Stomach (tissue), 19 donors: ENCODE measurements at regions of chr2 and their contacts with region 1.

Region 1: GRCh38 chr2:127859712-127860085 is 1.7 kb upstream of the POLR2D start:
- DNase-seq: peak; percentile 88 to 93
- H3K4me3 ChIP-seq: no peak overlapping the region
- H3K27ac ChIP-seq: no peak overlapping the region
- H3K4me1 ChIP-seq: peaks cover 15 to 48% (median 37%) of the 10 kb centered on the region in 4 donors
- H3K27me3 ChIP-seq: no peaks in the 10 kb centered on the region
- CTCF ChIP-seq: no peak
- EP300 ChIP-seq: no peak
- POLR2A ChIP-seq: no peak

Region 2: GRCh38 chr2:127563458-127564428 is 296.0 kb before region 1 on chr2:
- intact Hi-C with region 1: no loop called
- DNase-seq: peak in 1 of 2 donors; percentile 20
- H3K4me3 ChIP-seq: no peak overlapping the region
- H3K27ac ChIP-seq: no peak overlapping the region
- H3K4me1 ChIP-seq: no peaks in the 10 kb centered on the region
- H3K27me3 ChIP-seq: peaks cover 0 to 11% (median 4%) of the 10 kb centered on the region in 3 donors
- CTCF ChIP-seq: no peak
- EP300 ChIP-seq: no peak
- POLR2A ChIP-seq: no peak

Region 3: GRCh38 chr2:127573771-127574170 is 285.9 kb before region 1 on chr2:
- intact Hi-C with region 1: no loop called
- DNase-seq: peak in 1 of 2 donors; percentile 20
- H3K4me3 ChIP-seq: no peak overlapping the region
- H3K27ac ChIP-seq: no peak overlapping the region
- H3K4me1 ChIP-seq: no peaks in the 10 kb centered on the region
- H3K27me3 ChIP-seq: peaks cover 0 to 16% (median 0%) of the 10 kb centered on the region in 3 donors
- CTCF ChIP-seq: no peak
- EP300 ChIP-seq: no peak
- POLR2A ChIP-seq: no peak

Region 4: GRCh38 chr2:127807678-127808353 is 51.9 kb before region 1 on chr2:
- intact Hi-C with region 1: loop called (anchors 5 kb)
- DNase-seq: no peak
- H3K4me3 ChIP-seq: no peak overlapping the region
- H3K27ac ChIP-seq: no peak overlapping the region
- H3K4me1 ChIP-seq: peaks cover 37 to 77% (median 55%) of the 10 kb centered on the region in 4 donors
- H3K27me3 ChIP-seq: no peaks in the 10 kb centered on the region
- CTCF ChIP-seq: no peak
- EP300 ChIP-seq: no peak
- POLR2A ChIP-seq: no peak

Region 5: GRCh38 chr2:127996160-127996559 is 136.5 kb after region 1 on chr2:
- intact Hi-C with region 1: no loop called
- DNase-seq: no peak
- H3K4me3 ChIP-seq: no peak overlapping the region
- H3K27ac ChIP-seq: no peak overlapping the region
- H3K4me1 ChIP-seq: no peaks in the 10 kb centered on the region
- H3K27me3 ChIP-seq: no peaks in the 10 kb centered on the region
- CTCF ChIP-seq: no peak
- EP300 ChIP-seq: no peak
- POLR2A ChIP-seq: no peak

Region 6: DNA sequence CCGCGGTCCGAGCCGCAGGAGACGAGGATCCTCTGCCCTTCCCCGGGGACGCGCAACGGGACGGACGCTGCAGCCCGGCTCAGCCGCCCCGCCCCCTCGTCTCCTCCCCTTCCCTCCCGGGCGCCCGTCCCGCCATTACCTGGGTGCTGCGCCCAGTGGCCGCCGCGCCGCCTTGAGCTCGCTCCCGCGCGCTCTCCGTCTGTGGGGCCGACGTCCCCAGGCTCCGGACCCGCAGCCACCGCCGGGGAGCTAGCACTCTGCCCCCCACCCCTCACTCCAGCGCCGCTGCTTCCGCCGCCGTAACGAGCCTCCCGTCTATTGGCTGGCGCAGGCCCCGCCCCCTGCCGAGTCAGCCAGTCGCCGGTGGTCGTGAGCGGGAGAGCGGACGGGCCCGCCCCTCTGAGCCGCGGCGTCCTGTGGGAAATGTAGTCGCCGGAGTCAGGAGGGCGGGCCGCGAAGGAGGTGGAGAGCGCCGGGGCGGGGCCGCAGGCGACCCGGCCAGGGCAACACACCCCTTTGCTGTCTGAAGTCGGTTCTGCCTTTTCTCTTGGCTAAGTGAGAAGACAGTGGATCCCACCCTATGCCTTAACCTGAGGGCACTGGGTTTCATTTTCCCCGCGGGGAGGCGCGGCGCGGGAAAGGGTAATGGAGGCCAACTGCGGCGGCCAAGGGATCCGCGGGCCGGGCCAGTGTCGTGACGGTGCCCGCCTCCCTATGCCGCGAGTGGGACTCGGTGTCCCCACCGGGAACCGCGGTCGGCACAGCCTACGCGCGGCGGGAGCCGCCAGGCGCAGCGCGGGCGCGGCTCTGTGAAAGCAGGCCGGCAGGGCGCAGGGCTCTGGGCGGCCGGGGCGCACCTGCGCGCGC is 168.3 kb after region 1 on chr2 and contains the start of gene SAP130:
- intact Hi-C with region 1: no loop called
- DNase-seq: peak; percentile 99
- H3K4me3 ChIP-seq: peak within 1 kb of the TSS; percentile 91 to 100 (median 96)
- H3K27ac ChIP-seq: peak within 1 kb of the TSS; percentile 94 to 100 (median 98)
- H3K4me1 ChIP-seq: peaks cover 8 to 34% (median 21%) of the 10 kb centered on the region in 4 donors
- H3K27me3 ChIP-seq: no peaks in the 10 kb centered on the region
- CTCF ChIP-seq: no peak
- EP300 ChIP-seq: no peak
- POLR2A ChIP-seq: peak in 1 of 4 donors; percentile 63
- total RNA-seq, gene SAP130: 4.8 to 42.0 (median 8.0) TPM